ENCODE measurements at regions of chr1 and their contacts with region 1.

Region 1: GRCh38 chr1:150010393-150011115 is at the start of gene OTUD7B:
- DNase-seq: peak; percentile 91
- H3K4me3 Mint-ChIP-seq: peak within 1 kb of the TSS; percentile 95
- H3K27ac Mint-ChIP-seq: peak within 1 kb of the TSS; percentile 95
- H3K4me1 Mint-ChIP-seq: peaks cover 29% of the 10 kb centered on the region
- H3K27me3 Mint-ChIP-seq: no peaks in the 10 kb centered on the region
- CTCF ChIP-seq: no peak
- total RNA-seq, gene OTUD7B: 44.3 and 47.4 TPM in 2 replicates

Region 2: GRCh38 chr1:149849947-149850360 is 160.6 kb before region 1 on chr1:
- CTCF ChIA-PET with region 1: no interaction called
- POLR2A ChIA-PET with region 1: interaction called, 23 read pairs
- intact Hi-C with region 1: no loop called
- DNase-seq: peak; percentile 25
- H3K4me3 Mint-ChIP-seq: peak overlapping the region; percentile 74
- H3K27ac Mint-ChIP-seq: peak overlapping the region; percentile 70
- H3K4me1 Mint-ChIP-seq: peaks cover 50% of the 10 kb centered on the region
- H3K27me3 Mint-ChIP-seq: no peaks in the 10 kb centered on the region
- CTCF ChIP-seq: no peak

Region 3: DNA sequence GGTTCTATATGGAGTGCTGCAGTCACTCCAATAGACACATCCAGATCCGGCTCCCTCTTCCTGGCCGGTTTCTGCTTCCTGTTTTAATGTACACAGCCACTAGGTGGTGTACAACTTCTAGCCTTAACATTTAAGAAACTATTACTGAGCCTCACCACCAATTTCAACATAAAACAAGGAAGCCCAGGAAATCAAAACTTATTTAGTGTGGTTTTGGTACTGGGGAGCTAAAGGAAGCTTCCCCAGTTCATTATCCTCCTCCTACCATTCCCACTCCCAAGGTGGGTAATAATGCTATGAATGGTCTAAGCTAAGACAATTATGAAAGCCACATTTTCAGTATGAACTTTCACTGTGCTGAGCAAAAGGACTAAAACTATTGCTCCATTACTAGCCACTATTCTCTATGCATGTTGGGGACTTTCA is 48.4 kb before region 1 on chr1:
- CTCF ChIA-PET with region 1: interaction called, 39 read pairs
- POLR2A ChIA-PET with region 1: interaction called, 41 read pairs
- intact Hi-C with region 1: loop called (anchors 1 kb)
- DNase-seq: peak; percentile 85
- H3K4me3 Mint-ChIP-seq: no peak overlapping the region
- H3K27ac Mint-ChIP-seq: peak overlapping the region; percentile 33
- H3K4me1 Mint-ChIP-seq: peaks cover 22% of the 10 kb centered on the region
- H3K27me3 Mint-ChIP-seq: no peaks in the 10 kb centered on the region
- CTCF ChIP-seq: peak; percentile 88

Region 4: GRCh38 chr1:149997585-149998262 is 12.8 kb before region 1 on chr1:
- CTCF ChIA-PET with region 1: interaction called, 37 read pairs
- POLR2A ChIA-PET with region 1: interaction called, 316 read pairs
- intact Hi-C with region 1: no loop called
- DNase-seq: no peak
- H3K4me3 Mint-ChIP-seq: no peak overlapping the region
- H3K27ac Mint-ChIP-seq: no peak overlapping the region
- H3K4me1 Mint-ChIP-seq: peaks cover 43% of the 10 kb centered on the region
- H3K27me3 Mint-ChIP-seq: no peaks in the 10 kb centered on the region
- CTCF ChIP-seq: no peak

Region 5: DNA sequence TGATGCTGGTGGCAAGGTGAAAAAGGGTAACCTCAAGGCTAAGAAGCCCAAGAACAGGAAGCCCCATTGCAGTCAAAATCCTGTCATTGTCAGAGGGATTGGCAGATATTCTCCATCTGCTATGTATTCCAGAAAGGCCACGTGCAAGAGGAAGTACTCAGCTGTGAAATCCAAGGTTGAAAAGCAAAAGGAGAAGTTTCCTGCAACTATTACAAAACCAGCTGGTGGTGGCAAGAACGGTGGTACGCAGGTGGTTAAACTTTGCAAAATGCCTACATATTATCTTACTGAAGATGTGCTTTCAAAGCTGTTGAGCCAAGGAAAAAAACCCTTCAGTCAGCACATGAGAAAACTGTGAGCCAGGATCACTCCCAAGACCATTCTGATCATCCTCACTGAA is 43.4 kb after region 1 on chr1:
- CTCF ChIA-PET with region 1: interaction called, 6 read pairs
- POLR2A ChIA-PET with region 1: interaction called, 21 read pairs
- intact Hi-C with region 1: loop called (anchors 2 kb)
- DNase-seq: no peak
- H3K4me3 Mint-ChIP-seq: no peak overlapping the region
- H3K27ac Mint-ChIP-seq: no peak overlapping the region
- H3K4me1 Mint-ChIP-seq: peaks cover 7% of the 10 kb centered on the region
- H3K27me3 Mint-ChIP-seq: no peaks in the 10 kb centered on the region
- CTCF ChIP-seq: no peak

Region 6: GRCh38 chr1:150186789-150187559 is 176.4 kb after region 1 on chr1:
- CTCF ChIA-PET with region 1: interaction called, 11 read pairs
- POLR2A ChIA-PET with region 1: interaction called, 4 read pairs
- intact Hi-C with region 1: no loop called
- DNase-seq: peak; percentile 74
- H3K4me3 Mint-ChIP-seq: no peak overlapping the region
- H3K27ac Mint-ChIP-seq: no peak overlapping the region
- H3K4me1 Mint-ChIP-seq: peaks cover 9% of the 10 kb centered on the region
- H3K27me3 Mint-ChIP-seq: no peaks in the 10 kb centered on the region
- CTCF ChIP-seq: peak; percentile 67

Region 7: GRCh38 chr1:150221552-150221951 is 211.0 kb after region 1 on chr1:
- CTCF ChIA-PET with region 1: no interaction called
- POLR2A ChIA-PET with region 1: no interaction called
- intact Hi-C with region 1: no loop called
- DNase-seq: peak; percentile 38
- H3K4me3 Mint-ChIP-seq: no peak overlapping the region
- H3K27ac Mint-ChIP-seq: no peak overlapping the region
- H3K4me1 Mint-ChIP-seq: no peaks in the 10 kb centered on the region
- H3K27me3 Mint-ChIP-seq: no peaks in the 10 kb centered on the region
- CTCF ChIP-seq: peak; percentile 43